CD4-positive, alpha-beta T cell (primary cell): ENCODE measurements at regions of chr21 and their contacts with region 1.

Region 1: GRCh38 chr21:35400233-35400957 is 351.3 kb upstream of the RUNX1 start:
- DNase-seq: peak in 12 of 14 experiments; percentile 3 to 81 (median 21)
- ATAC-seq: peak; percentile 92
- H3K4me3 ChIP-seq: no peak overlapping the region
- H3K4me3 Mint-ChIP-seq: no peak overlapping the region
- H3K27ac ChIP-seq: no peak overlapping the region
- H3K27ac Mint-ChIP-seq: no peak overlapping the region
- H3K4me1 ChIP-seq: peaks cover 3% of the 10 kb centered on the region
- H3K4me1 Mint-ChIP-seq: peaks cover 6% of the 10 kb centered on the region
- H3K27me3 ChIP-seq: no peaks in the 10 kb centered on the region
- H3K27me3 Mint-ChIP-seq: no peaks in the 10 kb centered on the region
- CTCF ChIP-seq: peak; percentile 75

Region 2: DNA sequence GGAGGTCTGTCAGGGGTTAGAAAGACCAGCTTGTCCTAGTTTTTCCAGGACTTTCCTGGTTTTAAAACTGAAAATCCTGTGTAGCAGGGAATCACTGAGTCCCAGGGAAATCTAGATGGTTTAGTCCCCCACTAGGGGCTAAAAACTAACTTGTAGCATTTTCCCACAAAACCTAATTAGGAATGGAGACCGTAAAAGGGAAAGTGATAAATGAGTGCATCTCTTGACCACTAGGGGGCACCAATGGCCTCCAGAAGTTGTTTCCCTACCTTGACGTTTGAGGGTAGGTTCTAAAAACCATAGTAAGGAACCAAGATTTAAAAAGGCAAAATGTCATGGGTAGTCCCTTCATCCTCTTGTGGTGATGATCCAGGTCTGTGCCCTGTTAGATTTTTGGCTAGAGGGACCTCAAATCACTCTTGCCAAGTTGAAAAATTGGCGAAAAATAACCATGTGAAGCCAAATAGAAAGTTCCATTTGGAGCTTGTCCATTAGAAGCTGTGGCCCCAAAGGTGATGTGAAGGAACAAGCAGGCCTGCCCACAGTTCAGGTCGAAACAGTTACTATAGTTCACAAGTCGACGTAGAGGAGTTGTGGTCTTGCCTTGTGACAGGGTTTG is 707.1 kb before region 1 on chr21:
- CTCF ChIA-PET with region 1: interaction called, 4 read pairs
- POLR2A ChIA-PET with region 1: no interaction called
- intact Hi-C with region 1: loop called (anchors 1 to 2 kb)
- DNase-seq: peak in 12 of 14 experiments; percentile 8 to 79 (median 30)
- ATAC-seq: peak; percentile 32
- H3K4me3 ChIP-seq: no peak overlapping the region
- H3K4me3 Mint-ChIP-seq: no peak overlapping the region
- H3K27ac ChIP-seq: no peak overlapping the region
- H3K27ac Mint-ChIP-seq: no peak overlapping the region
- H3K4me1 ChIP-seq: no peaks in the 10 kb centered on the region
- H3K4me1 Mint-ChIP-seq: no peaks in the 10 kb centered on the region
- H3K27me3 ChIP-seq: peaks cover 4 to 13% of the 10 kb centered on the region in 2 experiments
- H3K27me3 Mint-ChIP-seq: peaks cover 16% of the 10 kb centered on the region
- CTCF ChIP-seq: peak; percentile 90

Region 3: DNA sequence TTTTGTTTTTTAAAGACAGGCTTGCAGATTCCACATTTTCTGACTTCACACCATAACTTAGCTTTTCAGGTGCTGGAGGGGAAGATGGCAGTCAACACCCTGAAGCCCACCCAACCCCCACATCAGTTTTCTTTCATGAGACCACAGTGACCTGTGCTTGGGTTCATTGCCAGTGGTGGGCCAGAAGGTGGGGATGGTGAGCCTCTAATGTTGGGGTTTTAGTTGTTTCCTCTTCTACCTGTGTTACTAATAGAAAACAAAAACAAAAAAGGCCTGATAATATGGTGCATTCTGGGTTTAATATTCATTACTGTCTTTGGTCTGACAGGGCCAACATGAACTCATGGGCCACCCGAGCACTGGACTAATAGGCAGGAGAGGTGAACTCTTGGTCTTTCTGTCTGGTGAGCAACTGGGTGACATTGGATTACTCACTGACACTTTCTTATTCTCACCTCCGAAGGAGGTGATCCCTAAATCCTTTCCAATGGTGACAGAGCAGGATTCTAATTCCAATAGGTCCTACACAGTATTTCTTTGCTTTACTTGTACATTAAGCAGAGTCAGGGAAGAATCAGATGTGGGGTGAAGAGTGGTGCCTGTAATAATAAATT is 598.8 kb before region 1 on chr21:
- CTCF ChIA-PET with region 1: no interaction called
- POLR2A ChIA-PET with region 1: no interaction called
- intact Hi-C with region 1: loop called (anchors 2 kb)
- DNase-seq: peak in 3 of 14 experiments; percentile 23 to 46 (median 38)
- ATAC-seq: no peak
- H3K4me3 ChIP-seq: no peak overlapping the region
- H3K4me3 Mint-ChIP-seq: no peak overlapping the region
- H3K27ac ChIP-seq: no peak overlapping the region
- H3K27ac Mint-ChIP-seq: peak overlapping the region; percentile 29
- H3K4me1 ChIP-seq: no peaks in the 10 kb centered on the region
- H3K4me1 Mint-ChIP-seq: peaks cover 21% of the 10 kb centered on the region
- H3K27me3 ChIP-seq: no peaks in the 10 kb centered on the region
- H3K27me3 Mint-ChIP-seq: no peaks in the 10 kb centered on the region
- CTCF ChIP-seq: no peak

Region 4: DNA sequence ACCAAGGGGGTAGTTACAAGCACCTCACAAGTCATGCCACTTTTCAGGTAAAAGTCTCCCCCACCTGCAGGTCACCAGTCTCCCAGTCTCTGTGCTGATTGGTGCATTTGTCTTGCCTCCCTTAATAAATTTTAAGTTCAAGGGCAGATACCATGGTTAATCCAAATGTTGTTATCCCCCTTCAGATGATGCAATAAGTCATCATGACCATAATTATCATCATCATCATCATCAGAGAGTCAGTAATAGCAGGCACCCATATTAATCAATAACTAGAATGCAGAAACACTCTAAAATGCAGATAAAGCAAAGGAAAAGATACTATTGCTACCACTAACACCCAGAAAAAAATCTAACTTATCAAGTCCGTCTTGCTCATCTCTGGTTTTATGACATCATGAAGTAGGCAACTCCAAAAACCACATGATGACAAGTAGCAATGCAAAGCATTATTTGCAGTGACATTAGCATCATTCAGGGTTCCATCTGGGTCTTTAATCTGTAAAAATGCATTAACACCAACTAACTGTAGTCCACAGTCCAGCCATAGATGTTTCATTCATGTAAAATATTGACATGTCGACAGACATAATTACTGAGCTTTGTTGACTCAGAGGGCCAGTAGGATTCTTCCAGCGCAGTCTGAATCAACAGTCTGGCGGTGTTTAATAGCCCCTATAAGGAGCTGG is 140.7 kb after region 1 on chr21:
- CTCF ChIA-PET with region 1: no interaction called
- POLR2A ChIA-PET with region 1: no interaction called
- intact Hi-C with region 1: no loop called
- DNase-seq: no peak
- ATAC-seq: no peak
- H3K4me3 ChIP-seq: no peak overlapping the region
- H3K4me3 Mint-ChIP-seq: no peak overlapping the region
- H3K27ac ChIP-seq: no peak overlapping the region
- H3K27ac Mint-ChIP-seq: no peak overlapping the region
- H3K4me1 ChIP-seq: no peaks in the 10 kb centered on the region
- H3K4me1 Mint-ChIP-seq: peaks cover 7% of the 10 kb centered on the region
- H3K27me3 ChIP-seq: no peaks in the 10 kb centered on the region
- H3K27me3 Mint-ChIP-seq: no peaks in the 10 kb centered on the region
- CTCF ChIP-seq: no peak

Region 5: GRCh38 chr21:35840197-35840799 is 439.9 kb after region 1 on chr21:
- CTCF ChIA-PET with region 1: interaction called, 5 read pairs
- POLR2A ChIA-PET with region 1: no interaction called
- intact Hi-C with region 1: loop called in 1 of 2 experiments (anchors 5 kb)
- DNase-seq: peak; percentile 9 to 77 (median 38)
- ATAC-seq: peak; percentile 51
- H3K4me3 ChIP-seq: no peak overlapping the region
- H3K4me3 Mint-ChIP-seq: no peak overlapping the region
- H3K27ac ChIP-seq: no peak overlapping the region
- H3K27ac Mint-ChIP-seq: no peak overlapping the region
- H3K4me1 ChIP-seq: no peaks in the 10 kb centered on the region
- H3K4me1 Mint-ChIP-seq: no peaks in the 10 kb centered on the region
- H3K27me3 ChIP-seq: no peaks in the 10 kb centered on the region
- H3K27me3 Mint-ChIP-seq: no peaks in the 10 kb centered on the region
- CTCF ChIP-seq: peak; percentile 78

Region 6: GRCh38 chr21:36113647-36114428 is 713.4 kb after region 1 on chr21:
- CTCF ChIA-PET with region 1: no interaction called
- POLR2A ChIA-PET with region 1: no interaction called
- intact Hi-C with region 1: loop called in 1 of 2 experiments (anchors 10 kb)
- DNase-seq: peak in 12 of 14 experiments; percentile 18 to 92 (median 48)
- ATAC-seq: peak; percentile 81
- H3K4me3 ChIP-seq: peak overlapping the region; percentile 56
- H3K4me3 Mint-ChIP-seq: peak overlapping the region; percentile 84
- H3K27ac ChIP-seq: peak overlapping the region; percentile 58 to 79
- H3K27ac Mint-ChIP-seq: peak overlapping the region; percentile 61
- H3K4me1 ChIP-seq: peaks cover 32% of the 10 kb centered on the region
- H3K4me1 Mint-ChIP-seq: peaks cover 27% of the 10 kb centered on the region
- H3K27me3 ChIP-seq: no peaks in the 10 kb centered on the region
- H3K27me3 Mint-ChIP-seq: no peaks in the 10 kb centered on the region
- CTCF ChIP-seq: no peak